ENCODE measurements at regions of chr2 and their contacts with region 1.

Region 1: GRCh38 chr2:109213646-109214417 is 84.8 kb downstream of the SH3RF3 start:
- DNase-seq: peak; percentile 84
- H3K4me3 Mint-ChIP-seq: peak overlapping the region; percentile 50
- H3K27ac Mint-ChIP-seq: peak overlapping the region; percentile 88
- H3K4me1 Mint-ChIP-seq: peaks cover 78% of the 10 kb centered on the region
- H3K27me3 Mint-ChIP-seq: peaks cover 78% of the 10 kb centered on the region

Region 2: DNA sequence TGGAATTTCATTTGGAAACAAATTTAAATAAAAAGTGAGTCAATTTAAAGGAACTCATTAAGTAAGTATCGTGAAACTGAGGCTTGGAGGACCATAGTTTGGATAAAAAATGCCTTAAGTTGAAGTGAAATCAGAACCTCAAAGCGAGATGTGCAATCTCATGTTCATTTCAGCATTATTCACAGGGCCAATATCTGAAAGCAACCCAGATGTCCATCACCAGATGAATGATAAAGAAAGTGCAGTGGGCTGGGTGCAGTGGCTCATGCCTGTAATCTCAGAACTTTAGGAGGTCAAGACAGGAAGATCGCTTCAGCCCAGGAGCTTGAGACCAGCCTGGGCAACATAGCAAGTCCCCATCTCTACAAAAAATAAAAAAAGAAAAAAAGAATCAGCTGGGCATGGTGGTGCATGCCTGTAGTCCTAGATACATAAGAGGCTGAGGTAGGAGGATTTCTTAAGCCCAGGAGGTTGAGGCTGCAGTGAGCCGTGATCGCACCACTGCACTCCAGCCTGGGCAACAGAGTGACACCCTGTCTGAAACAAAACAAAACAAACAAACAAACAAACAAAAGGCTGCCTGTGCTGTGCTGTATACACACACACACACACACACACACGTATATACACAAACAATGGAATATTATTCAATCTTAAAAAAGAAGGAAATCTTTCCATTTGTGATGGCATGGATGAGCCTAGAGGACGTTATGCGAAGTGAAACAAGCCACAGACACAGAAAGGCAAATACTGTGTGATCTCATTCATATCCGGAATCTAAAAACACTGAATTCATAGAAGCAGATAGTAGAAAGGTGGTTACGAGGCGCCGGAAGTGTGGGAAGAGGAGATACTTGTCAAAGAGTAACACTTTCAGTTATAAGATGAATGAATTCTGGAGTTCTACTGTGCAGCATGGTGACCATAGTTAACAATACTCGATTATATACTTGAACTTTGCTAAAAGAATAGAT is 70.3 kb before region 1 on chr2:
- CTCF ChIA-PET with region 1: no interaction called
- POLR2A ChIA-PET with region 1: interaction called, 10 read pairs
- DNase-seq: peak; percentile 85
- H3K4me3 Mint-ChIP-seq: peak overlapping the region; percentile 9
- H3K27ac Mint-ChIP-seq: peak overlapping the region; percentile 70
- H3K4me1 Mint-ChIP-seq: peaks cover 34% of the 10 kb centered on the region
- H3K27me3 Mint-ChIP-seq: peaks cover 64% of the 10 kb centered on the region

Region 3: GRCh38 chr2:109238580-109238979 is 24.7 kb after region 1 on chr2:
- CTCF ChIA-PET with region 1: interaction called, 3 read pairs
- POLR2A ChIA-PET with region 1: interaction called, 15 read pairs
- DNase-seq: peak; percentile 69
- H3K4me3 Mint-ChIP-seq: peak overlapping the region; percentile 23
- H3K27ac Mint-ChIP-seq: peak overlapping the region; percentile 82
- H3K4me1 Mint-ChIP-seq: peaks cover 27% of the 10 kb centered on the region
- H3K27me3 Mint-ChIP-seq: peaks cover 31% of the 10 kb centered on the region

Region 4: GRCh38 chr2:109637749-109638570 is 424.1 kb after region 1 on chr2:
- CTCF ChIA-PET with region 1: no interaction called
- POLR2A ChIA-PET with region 1: no interaction called
- DNase-seq: no peak
- H3K4me3 Mint-ChIP-seq: no peak overlapping the region
- H3K27ac Mint-ChIP-seq: peak overlapping the region; percentile 32
- H3K4me1 Mint-ChIP-seq: peaks cover 27% of the 10 kb centered on the region
- H3K27me3 Mint-ChIP-seq: peaks cover 2% of the 10 kb centered on the region

Measured in activated CD4-positive, alpha-beta memory T cell treated with anti-CD3 and anti-CD28 coated beads, Interleukin-2, amount 10 ng/mL, durations not matched to agents 7 days and 5 days (primary cell).